Kidney (tissue), 22 donors: ENCODE measurements at regions of chr17 and their contacts with region 1.

Region 1: DNA sequence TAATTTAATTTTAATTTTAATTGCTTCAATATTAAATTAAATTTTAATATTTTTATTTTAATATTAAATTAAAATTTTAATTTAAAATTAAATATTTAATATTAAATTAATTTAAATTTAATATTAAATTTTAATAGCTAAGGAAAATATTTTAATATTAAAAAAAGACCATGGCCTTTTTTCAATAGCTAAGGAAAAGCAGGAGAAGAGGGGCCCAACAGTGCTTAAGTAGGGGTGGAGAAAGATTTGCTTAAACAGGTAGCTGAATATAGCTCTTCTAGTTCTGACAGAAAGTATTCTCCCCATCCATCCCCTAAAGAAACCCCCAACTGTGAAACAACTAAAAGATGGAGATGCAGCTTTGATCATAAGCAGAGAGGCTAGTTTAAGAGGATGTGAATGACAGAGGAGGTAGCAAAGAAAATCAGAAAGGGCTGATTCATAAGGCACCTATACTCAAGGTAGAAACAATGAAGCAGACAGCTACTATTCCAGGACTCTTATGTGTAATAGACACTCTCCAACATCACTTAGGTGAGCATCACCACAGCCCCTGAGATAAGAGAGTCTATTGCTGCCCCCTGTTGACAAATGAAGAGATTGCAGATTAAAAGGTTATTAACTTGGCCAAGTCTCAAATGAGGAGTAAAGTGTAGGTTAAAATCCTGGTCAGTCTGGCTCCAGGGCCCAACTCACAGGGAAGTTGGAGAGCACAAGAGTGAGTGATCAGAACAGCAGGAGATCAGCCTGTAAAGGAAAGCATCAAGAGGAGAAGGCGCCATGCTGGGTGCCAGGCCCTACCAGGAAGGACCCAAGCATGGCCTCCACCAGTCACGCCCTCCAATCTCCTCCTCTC is 7.8 kb upstream of the RNASEK start:
- DNase-seq: peak in 3 of 5 donors; percentile 24 to 88 (median 83)
- H3K4me3 ChIP-seq: no peak overlapping the region
- H3K27ac ChIP-seq: no peak overlapping the region
- H3K4me1 ChIP-seq: peaks cover 0 to 3% (median 0%) of the 10 kb centered on the region in 3 donors
- H3K27me3 ChIP-seq: no peaks in the 10 kb centered on the region
- CTCF ChIP-seq: peak; percentile 70

Region 2: GRCh38 chr17:6914711-6915110 is 89.9 kb before region 1 on chr17:
- intact Hi-C with region 1: loop called (anchors 5 kb)
- DNase-seq: peak in 1 of 5 donors; percentile 38
- H3K4me3 ChIP-seq: no peak overlapping the region
- H3K27ac ChIP-seq: no peak overlapping the region
- H3K4me1 ChIP-seq: peaks cover 0 to 4% (median 0%) of the 10 kb centered on the region in 3 donors
- H3K27me3 ChIP-seq: peaks cover 4% of the 10 kb centered on the region
- CTCF ChIP-seq: no peak

Region 3: GRCh38 chr17:7045909-7046724 is 41.5 kb after region 1 on chr17:
- intact Hi-C with region 1: no loop called
- DNase-seq: peak; percentile 64 to 94 (median 92)
- H3K4me3 ChIP-seq: peak overlapping the region; percentile 25 to 40 (median 35)
- H3K27ac ChIP-seq: peak overlapping the region in 1 of 2 donors; percentile 51
- H3K4me1 ChIP-seq: peaks cover 3 to 20% (median 10%) of the 10 kb centered on the region in 3 donors
- H3K27me3 ChIP-seq: peaks cover 7% of the 10 kb centered on the region
- CTCF ChIP-seq: peak; percentile 79

Region 4: GRCh38 chr17:7072406-7072805 is 67.8 kb after region 1 on chr17:
- intact Hi-C with region 1: no loop called
- DNase-seq: no peak
- H3K4me3 ChIP-seq: no peak overlapping the region
- H3K27ac ChIP-seq: no peak overlapping the region
- H3K4me1 ChIP-seq: no peaks in the 10 kb centered on the region
- H3K27me3 ChIP-seq: no peaks in the 10 kb centered on the region
- CTCF ChIP-seq: no peak